Mammary epithelial cell (primary cell): ENCODE measurements at regions of chr1 and their contacts with region 1.

Region 1: DNA sequence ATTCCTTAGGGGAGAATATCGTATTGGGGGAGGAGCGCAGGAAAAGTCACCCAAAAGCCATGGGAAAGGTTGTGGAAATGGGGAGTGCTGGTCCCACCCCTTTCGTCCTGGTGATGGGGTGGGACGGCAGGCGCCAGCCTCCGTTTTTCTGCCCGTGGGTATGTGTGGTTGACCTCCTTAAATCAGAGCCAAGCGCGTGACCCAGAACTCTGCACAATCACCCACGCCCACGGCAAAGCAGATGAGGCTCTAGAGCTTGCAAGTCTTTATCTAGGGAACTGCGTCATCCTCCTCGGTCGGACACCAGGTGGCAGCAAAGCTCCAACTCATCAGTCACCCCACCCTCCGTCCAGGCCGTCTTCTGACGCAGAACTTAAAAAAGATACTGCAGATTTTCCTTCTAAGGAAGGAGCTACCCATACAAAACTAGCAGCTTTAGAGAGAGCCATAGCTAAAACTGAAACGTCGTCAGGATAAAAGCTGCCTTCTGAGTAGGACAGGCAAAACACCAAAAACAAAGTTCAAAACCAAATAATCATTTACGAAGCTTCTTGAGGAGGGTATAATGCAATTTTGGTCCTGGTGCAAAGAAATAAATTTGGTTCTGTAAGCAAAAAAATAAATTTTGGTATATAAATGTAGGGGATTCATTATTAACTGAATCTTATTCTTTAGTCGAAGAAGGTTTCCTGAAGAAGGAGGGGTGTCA is 62.0 kb downstream of the TBX19 start:
- DNase-seq: peak; percentile 69
- H3K4me3 ChIP-seq: no peak overlapping the region
- H3K27ac ChIP-seq: no peak overlapping the region
- H3K4me1 ChIP-seq: peaks cover 14% of the 10 kb centered on the region
- H3K27me3 ChIP-seq: no peaks in the 10 kb centered on the region
- CTCF ChIP-seq: peak; percentile 68 to 77

Region 2: DNA sequence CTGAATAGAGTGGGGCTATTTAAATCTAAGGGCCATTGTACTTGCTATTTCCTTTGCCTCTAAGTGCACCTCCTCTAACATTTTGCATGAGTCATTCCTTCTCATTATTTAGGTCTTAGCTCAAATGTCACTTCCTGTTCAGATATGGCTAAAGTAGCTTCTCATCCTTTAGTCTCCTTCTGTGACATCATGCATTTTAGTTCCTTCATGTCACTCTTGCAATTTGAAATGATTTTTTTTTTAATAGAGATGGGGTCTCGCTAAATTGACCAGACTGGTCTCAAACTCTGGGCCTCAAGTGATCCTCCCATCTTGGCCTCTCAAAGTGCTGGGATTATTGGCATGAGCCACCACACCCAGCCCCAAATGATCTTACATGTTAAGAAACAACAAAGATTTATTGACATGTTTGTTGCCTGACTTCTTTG is 55.5 kb before region 1 on chr1:
- CTCF ChIA-PET with region 1: no interaction called
- dilution Hi-C with region 1: no loop called
- in situ Hi-C with region 1: no loop called
- intact Hi-C with region 1: no loop called
- DNase-seq: peak; percentile 61
- H3K4me3 ChIP-seq: no peak overlapping the region
- H3K27ac ChIP-seq: no peak overlapping the region
- H3K4me1 ChIP-seq: peaks cover 25% of the 10 kb centered on the region
- H3K27me3 ChIP-seq: no peaks in the 10 kb centered on the region
- CTCF ChIP-seq: no peak

Region 3: DNA sequence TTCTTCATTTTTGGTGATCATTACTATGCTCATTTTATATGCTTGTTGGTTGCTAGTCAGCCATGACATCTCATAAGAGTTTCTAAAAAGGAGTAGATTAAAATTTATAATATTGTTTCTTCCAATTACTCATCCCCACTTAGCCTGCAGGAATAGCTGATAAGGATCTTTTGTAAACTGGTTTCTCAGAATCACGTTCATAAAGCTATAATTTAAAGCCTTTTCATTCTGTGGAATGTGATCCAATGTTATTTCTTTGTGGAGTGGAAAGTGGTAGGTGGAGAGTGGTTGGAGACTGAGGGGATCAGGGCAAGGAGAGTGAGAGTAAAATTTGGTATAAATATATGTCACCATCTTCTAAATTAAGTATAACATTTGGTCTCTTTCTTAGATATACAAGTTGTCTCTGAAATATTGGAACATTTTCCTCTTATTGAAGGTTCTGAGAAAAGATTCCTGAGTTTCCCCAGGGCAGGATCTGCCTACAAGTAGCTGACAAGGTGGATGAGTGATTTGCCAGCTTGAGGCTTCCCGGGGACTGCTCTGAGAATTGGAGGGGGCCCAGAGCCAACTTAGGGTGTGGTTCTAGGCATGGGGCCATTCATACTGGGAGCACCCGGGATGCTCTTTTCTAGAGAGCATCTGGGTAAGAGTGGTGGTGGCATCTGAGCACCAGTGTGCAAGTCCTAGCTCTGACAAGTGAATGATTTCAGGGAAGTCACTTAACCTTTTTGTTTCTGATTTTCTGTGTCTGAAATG is 54.4 kb after region 1 on chr1:
- CTCF ChIA-PET with region 1: no interaction called
- dilution Hi-C with region 1: no loop called
- in situ Hi-C with region 1: no loop called
- intact Hi-C with region 1: no loop called
- DNase-seq: peak; percentile 30
- H3K4me3 ChIP-seq: no peak overlapping the region
- H3K27ac ChIP-seq: no peak overlapping the region
- H3K4me1 ChIP-seq: peaks cover 6% of the 10 kb centered on the region
- H3K27me3 ChIP-seq: no peaks in the 10 kb centered on the region
- CTCF ChIP-seq: no peak

Region 4: GRCh38 chr1:168550976-168551375 is 208.2 kb after region 1 on chr1:
- CTCF ChIA-PET with region 1: interaction called, 5 read pairs
- dilution Hi-C with region 1: no loop called
- in situ Hi-C with region 1: no loop called
- intact Hi-C with region 1: loop called (anchors 1 kb)
- DNase-seq: no peak
- H3K4me3 ChIP-seq: no peak overlapping the region
- H3K27ac ChIP-seq: no peak overlapping the region
- H3K4me1 ChIP-seq: no peaks in the 10 kb centered on the region
- H3K27me3 ChIP-seq: no peaks in the 10 kb centered on the region
- CTCF ChIP-seq: no peak

Region 5: DNA sequence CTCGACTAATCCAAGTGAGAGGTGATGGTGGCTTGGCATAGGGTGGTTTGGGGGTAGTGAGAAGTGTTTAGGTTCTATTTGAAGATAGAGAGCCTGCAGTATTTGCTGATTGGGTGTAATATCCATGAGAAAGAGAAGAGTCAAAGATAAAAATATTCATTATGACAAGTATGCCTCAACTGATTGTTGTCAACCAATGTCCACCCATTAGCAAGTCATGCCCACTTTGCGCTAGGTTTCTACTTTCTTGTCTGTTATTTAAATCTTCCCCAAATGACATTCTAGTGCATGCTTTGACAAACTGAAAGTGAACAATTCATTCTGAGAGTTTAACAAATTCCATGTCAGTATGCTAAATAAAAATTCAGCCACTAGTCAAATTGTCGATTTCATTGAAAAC is 229.9 kb after region 1 on chr1:
- CTCF ChIA-PET with region 1: no interaction called
- dilution Hi-C with region 1: no loop called
- in situ Hi-C with region 1: loop called in 1 of 2 experiments (anchors 10 kb)
- intact Hi-C with region 1: loop called (anchors 1 kb)
- DNase-seq: no peak
- H3K4me3 ChIP-seq: no peak overlapping the region
- H3K27ac ChIP-seq: no peak overlapping the region
- H3K4me1 ChIP-seq: no peaks in the 10 kb centered on the region
- H3K27me3 ChIP-seq: peaks cover 4% of the 10 kb centered on the region
- CTCF ChIP-seq: no peak

Region 6: DNA sequence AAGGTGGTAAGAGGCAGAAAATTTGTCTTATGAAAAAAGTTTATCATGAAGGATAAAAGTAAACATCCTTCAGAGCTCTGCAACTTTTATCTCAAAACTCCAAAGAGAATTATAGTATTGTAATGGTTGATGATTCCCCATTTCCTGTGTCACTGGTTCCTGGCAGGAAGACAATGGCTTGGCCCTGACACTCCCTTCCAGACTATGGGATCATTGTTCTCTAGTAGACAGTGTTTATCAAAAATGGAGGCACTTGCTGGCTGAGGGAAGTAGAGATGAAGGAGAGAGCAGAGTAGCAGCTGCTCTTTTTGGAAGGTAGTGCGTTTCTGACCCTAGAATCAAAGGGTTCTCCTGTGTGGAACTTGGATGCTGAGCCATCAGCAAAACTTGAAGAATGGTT is 617.9 kb after region 1 on chr1:
- CTCF ChIA-PET with region 1: no interaction called
- dilution Hi-C with region 1: no loop called
- in situ Hi-C with region 1: no loop called
- intact Hi-C with region 1: no loop called
- DNase-seq: no peak
- H3K4me3 ChIP-seq: no peak overlapping the region
- H3K27ac ChIP-seq: no peak overlapping the region
- H3K4me1 ChIP-seq: peaks cover 9% of the 10 kb centered on the region
- H3K27me3 ChIP-seq: no peaks in the 10 kb centered on the region
- CTCF ChIP-seq: no peak